Naive thymus-derived CD4-positive, alpha-beta T cell (primary cell): ENCODE measurements at regions of chr19 and their contacts with region 1.

Region 1: GRCh38 chr19:8832132-8833021 is at the starts of genes MBD3L1 and ZNF558:
- DNase-seq: peak; percentile 99 to 100 (median 99)
- ATAC-seq: peak; percentile 92
- H3K4me3 ChIP-seq: peak within 1 kb of the TSS; percentile 79
- H3K4me3 Mint-ChIP-seq: peak within 1 kb of the TSS; percentile 86 to 98 (median 90)
- H3K27ac ChIP-seq: peak within 1 kb of the TSS; percentile 93
- H3K27ac Mint-ChIP-seq: peak within 1 kb of the TSS; percentile 93 to 99 (median 96)
- H3K4me1 ChIP-seq: peaks cover 9 to 11% of the 10 kb centered on the region in 2 donors
- H3K4me1 Mint-ChIP-seq: peaks cover 6 to 38% (median 24%) of the 10 kb centered on the region in 7 donors
- H3K27me3 ChIP-seq: no peaks in the 10 kb centered on the region
- H3K27me3 Mint-ChIP-seq: peaks cover 0 to 16% (median 0%) of the 10 kb centered on the region in 5 donors
- total RNA-seq, gene MBD3L1: not detected
- total RNA-seq, gene ZNF558: 18.7 to 44.9 (median 26.3) TPM

Region 2: DNA sequence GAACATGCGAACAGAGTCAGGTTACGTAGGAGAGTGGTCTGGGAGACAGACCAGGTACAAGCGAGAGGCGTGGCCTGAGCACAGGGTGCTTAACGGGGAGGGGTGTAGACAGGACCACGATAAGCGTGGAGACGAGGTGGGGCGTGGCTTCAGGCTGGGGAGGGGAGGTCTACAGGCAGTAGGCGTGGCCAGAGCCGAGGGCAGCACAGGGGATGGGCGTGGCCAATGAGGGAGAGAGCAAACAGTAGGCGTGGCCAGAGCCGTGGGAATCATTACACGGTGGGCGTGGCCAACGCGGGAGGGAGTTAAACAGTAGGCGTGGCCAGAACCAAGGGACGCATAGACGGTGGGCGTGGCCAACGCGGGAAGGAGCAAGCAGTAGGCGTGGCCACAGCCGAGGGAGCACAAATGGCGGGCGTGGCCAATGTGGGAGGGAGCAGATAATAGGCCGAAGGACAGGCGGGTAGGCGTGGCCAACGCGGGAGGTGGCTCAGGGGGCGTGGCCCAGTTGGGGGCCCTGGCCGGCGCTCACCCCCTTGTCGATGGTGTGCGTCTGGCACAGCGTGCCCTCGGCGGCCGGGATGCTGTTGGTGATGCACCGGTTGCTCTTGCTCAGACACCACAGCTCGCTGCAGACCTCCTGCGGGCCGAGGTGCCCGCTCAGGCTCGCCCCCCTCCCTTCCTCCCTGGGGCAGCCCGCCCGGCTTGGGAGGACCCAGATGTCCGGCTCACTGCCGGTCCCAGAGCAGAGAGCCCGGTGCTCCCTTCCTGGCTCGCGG is 240.0 kb before region 1 on chr19:
- CTCF ChIA-PET with region 1: no interaction called
- POLR2A ChIA-PET with region 1: no interaction called
- intact Hi-C with region 1: loop called in 1 of 2 experiments (anchors 5 kb)
- DNase-seq: peak; percentile 80 to 98 (median 96)
- ATAC-seq: peak; percentile 93
- H3K4me3 ChIP-seq: peak overlapping the region; percentile 81
- H3K4me3 Mint-ChIP-seq: peak overlapping the region; percentile 81 to 95 (median 88)
- H3K27ac ChIP-seq: peak overlapping the region; percentile 63
- H3K27ac Mint-ChIP-seq: peak overlapping the region; percentile 17 to 89 (median 76)
- H3K4me1 ChIP-seq: peaks cover 5 to 15% of the 10 kb centered on the region in 2 donors
- H3K4me1 Mint-ChIP-seq: peaks cover 6 to 37% (median 29%) of the 10 kb centered on the region in 7 donors
- H3K27me3 ChIP-seq: no peaks in the 10 kb centered on the region
- H3K27me3 Mint-ChIP-seq: peaks cover 0 to 29% (median 0%) of the 10 kb centered on the region in 5 donors

Region 3: DNA sequence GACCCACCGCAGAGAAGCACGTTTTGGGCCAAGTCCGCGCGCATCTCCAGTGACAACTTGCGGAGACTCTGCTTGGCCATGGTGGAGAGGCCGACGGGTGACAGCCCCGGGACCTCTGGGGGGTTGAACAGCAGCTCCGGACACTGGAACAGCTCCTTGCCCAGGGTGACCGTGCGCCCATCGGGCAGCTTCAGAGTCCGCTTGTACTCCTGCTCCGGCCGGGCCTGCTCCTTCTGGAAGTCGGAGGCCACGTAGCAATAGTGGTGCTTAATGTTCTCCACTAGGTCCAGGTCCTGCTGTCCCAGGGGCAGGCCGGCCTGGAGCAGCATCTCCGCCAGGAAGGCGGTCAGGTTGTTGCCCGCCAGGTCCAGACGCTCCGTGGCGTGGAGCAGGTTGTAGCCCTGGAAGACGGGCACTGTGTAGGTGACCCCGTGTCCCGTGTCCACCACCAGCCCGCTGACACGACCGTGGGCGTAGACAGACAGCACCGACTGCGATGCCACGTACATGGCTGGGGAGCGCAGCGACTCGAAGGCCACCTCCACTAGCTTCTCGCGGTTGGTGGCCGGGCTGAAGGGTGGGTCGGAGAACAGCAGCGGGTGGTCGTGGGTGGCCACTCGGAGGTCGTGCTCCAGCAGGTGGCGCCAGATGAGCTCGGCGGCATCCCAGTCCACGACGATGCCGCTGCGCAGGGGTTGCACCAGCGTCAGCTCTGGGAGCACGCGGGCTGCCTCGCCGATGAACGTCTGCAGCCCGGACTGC is 134.5 kb before region 1 on chr19:
- CTCF ChIA-PET with region 1: no interaction called
- POLR2A ChIA-PET with region 1: no interaction called
- intact Hi-C with region 1: loop called in 1 of 2 experiments (anchors 10 kb)
- DNase-seq: no peak
- ATAC-seq: no peak
- H3K4me3 ChIP-seq: no peak overlapping the region
- H3K4me3 Mint-ChIP-seq: no peak overlapping the region
- H3K27ac ChIP-seq: no peak overlapping the region
- H3K27ac Mint-ChIP-seq: no peak overlapping the region
- H3K4me1 ChIP-seq: peaks cover 26 to 27% of the 10 kb centered on the region in 2 donors
- H3K4me1 Mint-ChIP-seq: peaks cover 21 to 49% (median 24%) of the 10 kb centered on the region in 7 donors
- H3K27me3 ChIP-seq: peaks cover 0 to 4% of the 10 kb centered on the region in 2 donors
- H3K27me3 Mint-ChIP-seq: peaks cover 0 to 21% (median 0%) of the 10 kb centered on the region in 5 donors

Region 4: GRCh38 chr19:8858260-8858659 is 25.9 kb after region 1 on chr19:
- CTCF ChIA-PET with region 1: no interaction called
- POLR2A ChIA-PET with region 1: no interaction called
- intact Hi-C with region 1: no loop called
- DNase-seq: no peak
- ATAC-seq: no peak
- H3K4me3 ChIP-seq: no peak overlapping the region
- H3K4me3 Mint-ChIP-seq: no peak overlapping the region
- H3K27ac ChIP-seq: no peak overlapping the region
- H3K27ac Mint-ChIP-seq: no peak overlapping the region
- H3K4me1 ChIP-seq: no peaks in the 10 kb centered on the region
- H3K4me1 Mint-ChIP-seq: no peaks in the 10 kb centered on the region
- H3K27me3 ChIP-seq: no peaks in the 10 kb centered on the region
- H3K27me3 Mint-ChIP-seq: peaks cover 0 to 41% (median 40%) of the 10 kb centered on the region in 5 donors

Region 5: DNA sequence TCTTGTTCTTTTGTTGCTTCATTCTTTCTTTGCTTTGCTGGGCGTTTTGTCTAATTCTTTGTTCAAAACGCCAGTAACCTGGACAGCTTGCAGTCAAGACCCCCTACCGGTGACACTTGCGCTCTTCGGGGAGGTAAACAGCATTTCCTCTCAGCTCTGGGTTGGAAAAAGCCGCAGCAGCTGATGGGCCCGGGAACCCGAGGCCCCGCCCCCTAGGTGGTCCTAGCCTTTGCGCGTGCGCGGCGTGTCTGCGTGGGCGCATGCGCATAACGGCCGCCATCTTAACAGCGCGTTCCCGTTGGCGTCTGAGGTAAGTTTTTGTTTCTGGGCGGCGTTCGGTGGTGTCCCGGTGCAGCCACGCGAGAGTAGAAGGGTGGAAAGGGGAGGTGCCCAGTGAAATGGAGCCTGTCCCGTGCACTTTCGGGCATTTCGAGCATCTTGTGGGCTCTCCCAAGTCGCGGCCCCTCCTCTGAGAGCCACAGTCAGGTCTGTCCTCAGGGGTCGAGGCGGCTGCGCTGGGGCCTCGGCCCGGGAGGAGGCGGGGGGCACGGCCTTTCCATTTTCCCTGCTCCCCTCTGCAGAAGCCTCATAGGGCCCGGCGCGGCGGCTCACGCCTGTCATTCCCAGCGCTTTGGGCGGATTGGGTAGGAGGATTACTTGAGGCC is 491.7 kb after region 1 on chr19 and contains the start of gene ZNF559:
- CTCF ChIA-PET with region 1: no interaction called
- POLR2A ChIA-PET with region 1: no interaction called
- intact Hi-C with region 1: loop called in 1 of 2 experiments (anchors 5 kb)
- DNase-seq: peak; percentile 93 to 99 (median 97)
- ATAC-seq: peak; percentile 97
- H3K4me3 ChIP-seq: peak within 1 kb of the TSS; percentile 74
- H3K4me3 Mint-ChIP-seq: peak within 1 kb of the TSS; percentile 92 to 99 (median 95)
- H3K27ac ChIP-seq: peak within 1 kb of the TSS; percentile 85
- H3K27ac Mint-ChIP-seq: peak within 1 kb of the TSS; percentile 91 to 97 (median 93)
- H3K4me1 ChIP-seq: peaks cover 0 to 10% of the 10 kb centered on the region in 2 donors
- H3K4me1 Mint-ChIP-seq: peaks cover 6 to 46% (median 29%) of the 10 kb centered on the region in 7 donors
- H3K27me3 ChIP-seq: no peaks in the 10 kb centered on the region
- H3K27me3 Mint-ChIP-seq: peaks cover 0 to 2% (median 0%) of the 10 kb centered on the region in 5 donors
- total RNA-seq, gene ZNF559: 9.1 to 58.2 (median 16.5) TPM

Region 6: GRCh38 chr19:9768175-9769112 is 936.1 kb after region 1 on chr19 and contains the start of gene ZNF846:
- CTCF ChIA-PET with region 1: no interaction called
- POLR2A ChIA-PET with region 1: no interaction called
- intact Hi-C with region 1: loop called in 1 of 2 experiments (anchors 1 kb)
- DNase-seq: peak; percentile 83 to 94 (median 91)
- ATAC-seq: peak; percentile 98
- H3K4me3 ChIP-seq: peak within 1 kb of the TSS; percentile 95
- H3K4me3 Mint-ChIP-seq: peak within 1 kb of the TSS; percentile 81 to 99 (median 95)
- H3K27ac ChIP-seq: peak within 1 kb of the TSS; percentile 93
- H3K27ac Mint-ChIP-seq: peak within 1 kb of the TSS; percentile 92 to 100 (median 97)
- H3K4me1 ChIP-seq: peaks cover 8 to 10% of the 10 kb centered on the region in 2 donors
- H3K4me1 Mint-ChIP-seq: peaks cover 0 to 21% (median 9%) of the 10 kb centered on the region in 7 donors
- H3K27me3 ChIP-seq: no peaks in the 10 kb centered on the region
- H3K27me3 Mint-ChIP-seq: no peaks in the 10 kb centered on the region
- total RNA-seq, gene ZNF846: 5.1 to 24.8 (median 13.0) TPM